Activated T-helper 1 cell treated with anti-CD3 and anti-CD28 coated beads, Interleukin-12 subunit alpha, Interleukin-12 subunit beta, Interleukin-2, Interleukin-4 antibody, amounts not matched to agents 30 ng/mL and 10 ng/mL and 1 ng/mL, durations not matched to agents 14 hours and 24 hours and 36 hours (primary cell): ENCODE measurements at regions of chr5 and their contacts with region 1.

Region 1: GRCh38 chr5:180802325-180803180 is at the start of gene MGAT1:
- DNase-seq: peak; percentile 72
- H3K4me3 Mint-ChIP-seq: peak within 1 kb of the TSS; percentile 94
- H3K27ac Mint-ChIP-seq: peak within 1 kb of the TSS; percentile 96
- H3K4me1 Mint-ChIP-seq: peaks cover 82% of the 10 kb centered on the region
- H3K27me3 Mint-ChIP-seq: no peaks in the 10 kb centered on the region
- total RNA-seq, gene MGAT1: 106 and 107 TPM in 2 replicates

Region 2: GRCh38 chr5:180739271-180739670 is 63.3 kb before region 1 on chr5:
- intact Hi-C with region 1: no loop called
- DNase-seq: no peak
- H3K4me3 Mint-ChIP-seq: no peak overlapping the region
- H3K27ac Mint-ChIP-seq: no peak overlapping the region
- H3K4me1 Mint-ChIP-seq: no peaks in the 10 kb centered on the region
- H3K27me3 Mint-ChIP-seq: peaks cover 6% of the 10 kb centered on the region

Region 3: GRCh38 chr5:180784497-180785097 is 18.0 kb before region 1 on chr5:
- intact Hi-C with region 1: loop called (anchors 2 kb)
- DNase-seq: peak; percentile 47
- H3K4me3 Mint-ChIP-seq: no peak overlapping the region
- H3K27ac Mint-ChIP-seq: no peak overlapping the region
- H3K4me1 Mint-ChIP-seq: peaks cover 15% of the 10 kb centered on the region
- H3K27me3 Mint-ChIP-seq: no peaks in the 10 kb centered on the region

Region 4: GRCh38 chr5:180831139-180832048 is 28.8 kb after region 1 on chr5:
- intact Hi-C with region 1: loop called (anchors 1 kb)
- DNase-seq: peak; percentile 76
- H3K4me3 Mint-ChIP-seq: peak overlapping the region; percentile 91
- H3K27ac Mint-ChIP-seq: peak overlapping the region; percentile 99
- H3K4me1 Mint-ChIP-seq: peaks cover 33% of the 10 kb centered on the region
- H3K27me3 Mint-ChIP-seq: no peaks in the 10 kb centered on the region

Region 5: DNA sequence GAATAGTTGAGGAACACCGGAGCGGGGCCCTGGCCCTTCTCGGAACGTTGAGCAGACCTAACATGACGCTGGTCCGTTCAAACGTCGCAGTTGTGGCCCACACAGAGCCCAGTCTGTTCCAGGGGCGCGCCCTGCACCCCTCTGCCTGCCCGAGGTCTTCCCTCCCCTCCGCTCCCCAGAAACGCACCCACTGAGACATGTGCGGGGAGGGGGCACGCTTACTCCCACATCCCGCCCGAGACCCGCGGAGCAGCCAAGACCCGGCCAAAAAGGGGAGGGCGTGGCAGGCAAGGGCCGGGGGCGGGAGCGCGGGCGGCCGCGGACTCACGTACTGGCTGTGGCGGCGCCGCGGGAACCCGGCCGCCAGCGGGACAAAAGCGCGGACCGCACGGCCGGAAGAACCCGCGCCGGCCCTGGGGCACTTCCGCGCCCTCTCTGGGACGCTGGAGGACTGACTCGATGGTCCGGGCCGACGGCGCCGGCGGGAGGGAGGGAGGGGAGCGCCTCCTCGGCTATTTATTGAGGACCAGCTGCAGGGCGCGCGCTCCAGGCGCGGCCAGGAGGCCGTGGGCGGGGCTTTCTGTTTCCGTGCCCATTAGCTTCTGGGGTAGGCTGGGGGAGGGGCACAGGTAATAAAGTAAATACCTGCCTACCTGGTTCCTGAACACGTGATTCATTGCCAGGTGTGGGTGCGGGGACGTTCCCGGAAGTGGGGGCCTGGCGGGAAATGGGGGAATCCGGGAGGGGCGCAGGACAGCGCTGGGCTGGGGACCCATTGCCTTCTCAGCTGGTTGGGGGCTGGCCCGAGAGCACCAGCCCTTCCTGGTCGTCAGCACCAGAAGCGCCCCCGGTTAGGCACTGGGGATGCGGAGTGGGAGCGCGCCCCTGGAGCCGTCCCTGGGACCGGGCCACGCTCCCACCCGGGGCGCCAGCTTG is 58.6 kb after region 1 on chr5 and contains the start of gene ZFP62:
- intact Hi-C with region 1: loop called (anchors 1 kb)
- DNase-seq: peak; percentile 82
- H3K4me3 Mint-ChIP-seq: peak within 1 kb of the TSS; percentile 90
- H3K27ac Mint-ChIP-seq: peak within 1 kb of the TSS; percentile 91
- H3K4me1 Mint-ChIP-seq: peaks cover 18% of the 10 kb centered on the region
- H3K27me3 Mint-ChIP-seq: peaks cover 4% of the 10 kb centered on the region
- total RNA-seq, gene ZFP62: 28.4 and 28.5 TPM in 2 replicates